Activated CD4-positive, alpha-beta memory T cell treated with anti-CD3 and anti-CD28 coated beads, Interleukin-2, amount 10 ng/mL, durations not matched to agents 7 days and 5 days (primary cell): ENCODE measurements at regions of chr1 and their contacts with region 1.

Region 1: GRCh38 chr1:26787706-26788514 is at the start of gene PIGV:
- DNase-seq: peak; percentile 90
- H3K4me3 Mint-ChIP-seq: peak within 1 kb of the TSS; percentile 79
- H3K27ac Mint-ChIP-seq: peak within 1 kb of the TSS; percentile 100
- H3K4me1 Mint-ChIP-seq: peaks cover 65% of the 10 kb centered on the region
- H3K27me3 Mint-ChIP-seq: no peaks in the 10 kb centered on the region
- total RNA-seq, gene PIGV: 16.6 to 16.9 TPM

Region 2: GRCh38 chr1:26500488-26501175 is 287.3 kb before region 1 on chr1:
- CTCF ChIA-PET with region 1: interaction called, 28 read pairs
- POLR2A ChIA-PET with region 1: interaction called, 30 read pairs
- DNase-seq: no peak
- H3K4me3 Mint-ChIP-seq: peak overlapping the region; percentile 87
- H3K27ac Mint-ChIP-seq: peak overlapping the region; percentile 93
- H3K4me1 Mint-ChIP-seq: peaks cover 28% of the 10 kb centered on the region
- H3K27me3 Mint-ChIP-seq: no peaks in the 10 kb centered on the region

Region 3: GRCh38 chr1:26614655-26615411 is 173.1 kb before region 1 on chr1:
- CTCF ChIA-PET with region 1: interaction called, 221 read pairs
- POLR2A ChIA-PET with region 1: interaction called, 16 read pairs
- DNase-seq: no peak
- H3K4me3 Mint-ChIP-seq: no peak overlapping the region
- H3K27ac Mint-ChIP-seq: no peak overlapping the region
- H3K4me1 Mint-ChIP-seq: peaks cover 9% of the 10 kb centered on the region
- H3K27me3 Mint-ChIP-seq: peaks cover 14% of the 10 kb centered on the region

Region 4: GRCh38 chr1:26700711-26701110 is 87.2 kb before region 1 on chr1:
- CTCF ChIA-PET with region 1: interaction called, 50 read pairs
- POLR2A ChIA-PET with region 1: interaction called, 516 read pairs
- DNase-seq: no peak
- H3K4me3 Mint-ChIP-seq: peak overlapping the region; percentile 39
- H3K27ac Mint-ChIP-seq: no peak overlapping the region
- H3K4me1 Mint-ChIP-seq: peaks cover 10% of the 10 kb centered on the region
- H3K27me3 Mint-ChIP-seq: no peaks in the 10 kb centered on the region

Region 5: GRCh38 chr1:26744075-26744959 is 43.6 kb before region 1 on chr1:
- CTCF ChIA-PET with region 1: interaction called, 35 read pairs
- POLR2A ChIA-PET with region 1: interaction called, 61 read pairs
- DNase-seq: peak; percentile 90
- H3K4me3 Mint-ChIP-seq: peak overlapping the region; percentile 51
- H3K27ac Mint-ChIP-seq: peak overlapping the region; percentile 91
- H3K4me1 Mint-ChIP-seq: peaks cover 77% of the 10 kb centered on the region
- H3K27me3 Mint-ChIP-seq: no peaks in the 10 kb centered on the region

Region 6: GRCh38 chr1:26811057-26811456 is 23.1 kb after region 1 on chr1:
- CTCF ChIA-PET with region 1: interaction called, 54 read pairs
- POLR2A ChIA-PET with region 1: interaction called, 36 read pairs
- DNase-seq: no peak
- H3K4me3 Mint-ChIP-seq: no peak overlapping the region
- H3K27ac Mint-ChIP-seq: peak overlapping the region; percentile 70
- H3K4me1 Mint-ChIP-seq: peaks cover 33% of the 10 kb centered on the region
- H3K27me3 Mint-ChIP-seq: no peaks in the 10 kb centered on the region

Region 7: GRCh38 chr1:26889551-26890466 is 101.9 kb after region 1 on chr1 and contains the start of gene GPN2:
- CTCF ChIA-PET with region 1: interaction called, 6 read pairs
- POLR2A ChIA-PET with region 1: interaction called, 14 read pairs
- DNase-seq: peak; percentile 82
- H3K4me3 Mint-ChIP-seq: peak within 1 kb of the TSS; percentile 99
- H3K27ac Mint-ChIP-seq: peak within 1 kb of the TSS; percentile 94
- H3K4me1 Mint-ChIP-seq: peaks cover 28% of the 10 kb centered on the region
- H3K27me3 Mint-ChIP-seq: no peaks in the 10 kb centered on the region
- total RNA-seq, gene GPN2: 29.4 to 31.4 TPM

Region 8: DNA sequence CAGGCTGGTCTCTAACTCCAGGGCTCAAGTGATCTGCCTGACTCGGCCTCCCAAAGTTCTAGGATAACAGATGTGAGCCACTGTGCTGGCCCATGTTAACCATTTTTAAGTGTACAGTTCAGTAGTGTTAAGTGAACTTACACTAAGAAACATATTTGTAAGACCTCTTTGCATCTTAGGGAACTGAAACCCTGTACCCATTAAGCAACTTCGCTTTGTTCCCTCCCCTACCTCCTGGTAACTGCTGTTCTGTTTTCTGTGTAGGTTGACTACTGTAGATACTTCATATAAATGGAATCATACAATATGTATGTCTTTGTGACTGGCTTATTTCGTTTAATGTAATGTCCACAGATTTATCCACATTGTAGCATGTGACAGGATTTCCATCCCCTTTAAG is 144.6 kb after region 1 on chr1:
- CTCF ChIA-PET with region 1: no interaction called
- POLR2A ChIA-PET with region 1: no interaction called
- DNase-seq: no peak
- H3K4me3 Mint-ChIP-seq: no peak overlapping the region
- H3K27ac Mint-ChIP-seq: no peak overlapping the region
- H3K4me1 Mint-ChIP-seq: no peaks in the 10 kb centered on the region
- H3K27me3 Mint-ChIP-seq: no peaks in the 10 kb centered on the region

Region 9: DNA sequence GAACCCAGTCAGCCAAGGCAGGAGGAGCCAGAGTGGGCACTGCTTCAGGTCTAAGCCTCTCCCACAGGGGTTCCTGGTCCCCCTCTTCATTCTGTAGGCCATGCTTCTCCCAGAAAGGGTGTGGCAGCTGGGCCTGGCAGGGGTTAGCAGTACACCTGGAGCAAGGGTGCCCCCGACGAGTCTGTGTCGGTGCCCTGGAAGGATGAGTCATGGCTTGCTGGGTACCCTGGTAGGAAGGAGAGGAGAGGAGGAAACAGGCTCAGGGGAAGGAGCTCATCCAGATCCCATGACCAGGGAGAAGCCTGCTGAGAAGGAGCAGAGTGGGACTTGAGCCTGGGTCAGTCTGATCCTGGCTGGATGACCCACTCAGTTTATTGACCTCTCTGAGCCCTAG is 162.0 kb after region 1 on chr1:
- CTCF ChIA-PET with region 1: no interaction called
- POLR2A ChIA-PET with region 1: no interaction called
- DNase-seq: no peak
- H3K4me3 Mint-ChIP-seq: no peak overlapping the region
- H3K27ac Mint-ChIP-seq: no peak overlapping the region
- H3K4me1 Mint-ChIP-seq: no peaks in the 10 kb centered on the region
- H3K27me3 Mint-ChIP-seq: no peaks in the 10 kb centered on the region